ENCODE measurements at regions of chr11 and their contacts with region 1.

Region 1: GRCh38 chr11:86818466-86819192 is 18.3 kb downstream of the PRSS23 start:
- DNase-seq: no peak
- H3K4me3 ChIP-seq: no peak overlapping the region
- H3K27ac ChIP-seq: no peak overlapping the region
- H3K4me1 ChIP-seq: no peaks in the 10 kb centered on the region
- H3K27me3 ChIP-seq: no peaks in the 10 kb centered on the region
- CTCF ChIP-seq: peak; percentile 83 to 87 (median 84)
- POLR2A ChIP-seq: no peak

Region 2: DNA sequence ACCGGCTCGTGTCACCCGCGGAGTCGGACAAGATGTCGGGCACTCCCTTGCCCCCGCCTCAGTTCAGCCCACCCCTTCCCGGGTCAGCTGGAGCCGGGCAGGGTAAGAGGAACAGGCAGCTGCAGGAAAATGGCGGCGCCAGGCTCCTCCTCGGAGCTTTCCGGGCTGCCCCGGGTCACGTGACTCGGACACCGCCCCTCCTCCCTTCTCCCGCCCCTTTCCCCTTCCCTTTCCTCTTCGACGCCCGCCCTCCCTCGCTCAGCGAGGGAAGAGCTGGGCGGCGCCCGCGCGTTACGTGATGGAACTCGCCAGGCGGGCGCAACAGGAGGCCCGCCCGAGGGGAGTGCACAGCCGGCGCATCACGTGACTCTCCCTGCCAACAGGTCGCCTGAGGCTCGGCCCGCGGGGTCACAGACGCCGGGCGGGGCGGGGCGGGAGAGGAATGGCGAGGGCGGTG is 749.6 kb before region 1 on chr11 and contains the start of gene PICALM:
- intact Hi-C with region 1: no loop called
- DNase-seq: peak; percentile 98
- H3K4me3 ChIP-seq: peak within 1 kb of the TSS; percentile 92 to 95
- H3K27ac ChIP-seq: peak within 1 kb of the TSS; percentile 95 to 97
- H3K4me1 ChIP-seq: peaks cover 6% of the 10 kb centered on the region
- H3K27me3 ChIP-seq: no peaks in the 10 kb centered on the region
- CTCF ChIP-seq: peak in 2 of 3 experiments; percentile 5 to 7
- POLR2A ChIP-seq: peak; percentile 26
- total RNA-seq, gene PICALM: 217 to 237 TPM

Region 3: GRCh38 chr11:86608251-86608799 is 210.3 kb before region 1 on chr11:
- intact Hi-C with region 1: loop called (anchors 5 kb)
- DNase-seq: peak; percentile 76
- H3K4me3 ChIP-seq: no peak overlapping the region
- H3K27ac ChIP-seq: no peak overlapping the region
- H3K4me1 ChIP-seq: peaks cover 11% of the 10 kb centered on the region
- H3K27me3 ChIP-seq: no peaks in the 10 kb centered on the region
- CTCF ChIP-seq: peak; percentile 82 to 89 (median 83)
- POLR2A ChIP-seq: no peak

Region 4: GRCh38 chr11:86904001-86904400 is 85.4 kb after region 1 on chr11:
- intact Hi-C with region 1: no loop called
- DNase-seq: no peak
- H3K4me3 ChIP-seq: no peak overlapping the region
- H3K27ac ChIP-seq: no peak overlapping the region
- H3K4me1 ChIP-seq: no peaks in the 10 kb centered on the region
- H3K27me3 ChIP-seq: no peaks in the 10 kb centered on the region
- CTCF ChIP-seq: no peak
- POLR2A ChIP-seq: no peak